ENCODE measurements at regions of chr17 and their contacts with region 1.

Region 1: DNA sequence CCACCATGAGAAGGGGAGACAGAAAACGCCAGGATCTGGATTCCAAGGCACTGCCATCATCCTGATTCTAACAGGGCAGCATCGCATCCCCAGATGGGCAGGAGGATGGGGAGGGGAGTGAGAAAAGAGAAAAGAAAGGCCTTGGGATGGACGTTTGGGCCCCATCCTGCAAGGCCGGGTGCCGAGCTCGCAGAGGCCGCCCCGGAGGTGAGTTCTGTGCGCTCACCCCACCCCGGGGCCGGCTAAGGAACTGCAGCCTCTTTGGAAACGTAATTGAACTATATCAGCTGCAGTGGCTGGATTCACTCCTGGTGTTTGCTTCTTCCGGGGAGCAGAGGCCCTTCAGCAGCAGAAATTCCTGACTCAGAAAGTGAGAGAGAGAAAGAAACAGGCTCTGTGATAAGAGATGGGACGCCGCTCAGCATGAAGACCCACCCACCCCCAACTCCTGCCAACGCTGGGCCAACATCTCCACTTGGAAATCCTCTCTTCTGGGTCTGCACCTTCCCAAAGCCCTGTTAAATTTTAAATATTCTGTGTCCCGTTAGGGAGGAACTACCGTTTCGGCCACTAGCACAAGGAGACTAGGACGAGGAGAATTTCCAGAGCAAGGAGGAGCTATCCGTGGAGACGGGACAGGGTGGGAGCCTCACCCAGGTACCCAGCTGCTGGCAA is 8.5 kb upstream of the SSTR2 start:
- DNase-seq: peak; percentile 62 to 73
- ATAC-seq: peak; percentile 81 to 95 (median 92)
- H3K4me3 ChIP-seq: no peak overlapping the region
- H3K27ac ChIP-seq: peak overlapping the region in 1 of 10 donors; percentile 10
- H3K4me1 ChIP-seq: peaks cover 0 to 20% (median 8%) of the 10 kb centered on the region in 9 donors
- H3K27me3 ChIP-seq: peaks cover 0 to 40% (median 24%) of the 10 kb centered on the region in 7 donors
- CTCF ChIP-seq: peak; percentile 50 to 89 (median 80)

Region 2: DNA sequence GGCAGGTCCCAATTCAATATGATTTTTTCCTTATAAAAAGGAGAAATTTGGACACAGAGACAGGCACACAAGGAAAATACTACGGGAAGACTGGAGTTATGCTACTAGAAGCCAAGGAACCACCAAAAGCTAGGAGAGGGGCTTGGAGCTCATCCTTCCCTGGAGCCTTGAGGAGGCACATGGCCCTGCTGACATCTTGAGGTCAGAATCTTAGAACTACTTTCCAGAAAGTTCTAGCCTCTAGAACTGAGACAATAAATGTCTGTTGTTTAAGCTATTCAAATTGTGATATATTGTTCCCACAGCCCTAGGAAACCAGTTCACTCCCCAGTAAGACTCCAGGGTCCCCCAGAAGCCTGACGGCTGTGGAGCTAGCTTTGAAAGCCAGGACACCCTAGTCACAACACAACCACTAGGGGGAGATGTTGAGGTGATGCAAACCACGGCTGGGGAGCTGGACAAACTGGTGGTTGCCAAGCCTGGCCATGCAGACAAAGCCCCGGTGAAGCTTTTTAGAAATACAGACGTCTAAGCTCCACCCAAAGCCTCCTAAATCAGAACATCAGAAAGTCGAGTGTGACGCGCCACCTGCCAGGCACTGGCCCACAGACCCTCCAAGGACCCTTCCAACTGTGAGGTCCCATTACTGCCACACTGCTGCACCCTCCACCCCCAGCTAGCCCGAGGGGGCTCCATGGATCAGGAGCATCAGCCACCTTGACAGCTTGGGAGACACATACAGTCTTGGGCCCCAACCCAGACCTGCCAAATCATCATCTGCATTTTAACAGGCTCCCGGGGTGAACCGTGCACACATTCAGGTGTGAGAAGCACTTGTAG is 170.2 kb before region 1 on chr17:
- intact Hi-C with region 1: loop called in 8 of 10 experiments (anchors 1 to 10 kb)
- DNase-seq: peak; percentile 30 to 70
- ATAC-seq: peak in 7 of 8 donors; percentile 60 to 90 (median 77)
- H3K4me3 ChIP-seq: no peak overlapping the region
- H3K27ac ChIP-seq: no peak overlapping the region
- H3K4me1 ChIP-seq: peaks cover 0 to 9% (median 0%) of the 10 kb centered on the region in 9 donors
- H3K27me3 ChIP-seq: no peaks in the 10 kb centered on the region
- CTCF ChIP-seq: peak; percentile 59 to 89 (median 84)

Region 3: GRCh38 chr17:72991651-72992050 is 164.7 kb before region 1 on chr17:
- intact Hi-C with region 1: loop called in 8 of 10 experiments (anchors 1 to 10 kb)
- DNase-seq: no peak
- ATAC-seq: no peak
- H3K4me3 ChIP-seq: no peak overlapping the region
- H3K27ac ChIP-seq: no peak overlapping the region
- H3K4me1 ChIP-seq: no peaks in the 10 kb centered on the region
- H3K27me3 ChIP-seq: no peaks in the 10 kb centered on the region
- CTCF ChIP-seq: no peak

Measured in heart right ventricle (tissue), 16 donors.